ENCODE measurements at regions of chr3 and their contacts with region 1.

Region 1: DNA sequence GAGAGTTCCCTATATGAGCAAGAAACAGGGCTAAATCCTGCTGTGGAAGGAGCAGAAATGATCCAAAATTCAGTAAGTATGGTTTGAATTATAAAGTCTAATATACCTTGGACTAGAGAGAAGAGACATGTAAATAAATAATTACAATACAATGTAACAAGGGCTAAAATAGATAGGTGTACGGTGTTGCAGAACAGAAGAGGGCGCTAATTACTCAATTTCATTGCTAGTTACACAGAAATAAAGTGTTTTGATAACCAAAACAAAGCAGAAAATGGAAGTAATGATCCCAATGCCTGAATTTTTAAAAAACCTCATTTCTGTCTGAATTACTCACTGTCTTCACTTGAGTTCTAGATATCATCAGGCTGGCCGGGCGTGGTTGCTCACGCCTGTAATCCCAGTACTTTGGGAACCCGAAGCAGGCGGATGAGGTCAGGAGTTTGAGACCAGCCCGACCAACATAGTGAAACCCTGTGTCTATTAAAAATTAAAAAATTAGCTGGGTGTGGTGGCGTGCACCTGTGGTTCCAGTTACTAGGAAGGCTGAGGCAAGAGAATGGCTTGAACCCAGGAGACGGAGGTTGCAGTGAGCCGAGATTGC is 8.3 kb upstream of the PLCH1 start:
- DNase-seq: peak; percentile 39
- ATAC-seq: peak; percentile 75
- H3K4me3 ChIP-seq: no peak overlapping the region
- H3K27ac ChIP-seq: no peak overlapping the region
- H3K4me1 ChIP-seq: no peaks in the 10 kb centered on the region
- H3K27me3 ChIP-seq: peaks cover 3% of the 10 kb centered on the region
- CTCF ChIP-seq: peak; percentile 52
- POLR2A ChIP-seq: no peak
- RAD21 ChIP-seq: peak; percentile 55

Region 2: DNA sequence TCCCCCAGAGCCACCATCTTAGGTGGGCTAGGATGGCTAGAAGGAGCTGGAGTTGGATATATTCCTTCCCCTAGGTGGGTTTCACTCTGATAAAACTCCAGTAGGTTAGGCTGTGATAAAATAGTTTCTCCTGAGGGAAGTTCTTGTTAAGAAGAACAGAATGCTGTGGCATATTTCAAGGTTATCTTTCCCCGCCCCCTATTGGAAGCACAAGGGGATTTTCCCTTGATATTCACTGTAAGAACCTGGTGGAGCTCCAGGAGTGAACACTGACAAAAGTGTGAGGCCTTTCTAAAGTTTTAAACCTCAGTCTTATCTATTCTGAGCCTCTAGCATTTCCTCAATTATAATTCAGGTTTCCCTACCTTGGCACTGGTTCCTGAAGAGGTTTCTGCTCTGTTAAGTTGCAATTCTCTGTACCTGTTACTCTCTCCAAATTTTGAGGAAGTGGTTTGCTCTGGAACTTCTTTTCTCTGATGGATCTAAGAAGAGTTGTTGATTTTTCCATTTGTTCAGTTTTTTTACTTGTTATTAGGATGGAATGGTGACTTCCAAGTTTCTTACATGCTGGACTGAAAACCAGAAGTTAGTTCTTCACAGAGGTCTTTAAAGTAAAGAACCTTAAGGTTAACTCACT is 230.8 kb after region 1 on chr3:
- CTCF ChIA-PET with region 1: no interaction called
- POLR2A ChIA-PET with region 1: no interaction called
- dilution Hi-C with region 1: no loop called
- in situ Hi-C with region 1: no loop called
- intact Hi-C with region 1: loop called (anchors 5 kb)
- DNase-seq: peak; percentile 30
- ATAC-seq: no peak
- H3K4me3 ChIP-seq: no peak overlapping the region
- H3K27ac ChIP-seq: no peak overlapping the region
- H3K4me1 ChIP-seq: no peaks in the 10 kb centered on the region
- H3K27me3 ChIP-seq: no peaks in the 10 kb centered on the region
- CTCF ChIP-seq: peak; percentile 32
- POLR2A ChIP-seq: no peak
- RAD21 ChIP-seq: no peak

Region 3: DNA sequence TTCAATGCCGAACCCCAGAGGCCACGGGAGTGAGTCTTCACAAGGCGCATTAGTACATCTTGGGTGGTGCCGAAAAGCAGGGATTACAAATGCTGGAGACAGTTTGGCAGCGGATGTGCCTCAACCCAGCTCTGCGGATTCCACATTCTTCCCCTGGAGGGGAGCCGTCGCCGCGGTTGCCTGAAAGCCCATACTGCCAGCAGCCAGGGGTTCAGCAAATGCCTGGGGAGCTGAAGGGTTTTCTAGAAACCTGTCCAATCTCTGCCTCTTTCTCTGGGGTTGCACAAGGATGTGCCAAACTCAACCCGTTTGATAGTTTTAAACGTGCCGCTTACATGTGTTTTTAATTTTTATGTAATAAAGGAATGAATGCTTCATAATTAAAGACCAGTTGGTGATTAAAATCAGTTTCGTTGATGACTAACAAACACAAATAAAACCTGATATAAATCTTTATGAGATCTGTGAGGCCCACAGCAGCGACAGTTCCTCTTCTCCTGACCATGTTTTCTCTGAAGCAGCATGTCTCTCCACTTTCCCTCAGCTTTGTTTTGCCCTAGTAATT is 998.4 kb after region 1 on chr3:
- CTCF ChIA-PET with region 1: no interaction called
- POLR2A ChIA-PET with region 1: no interaction called
- dilution Hi-C with region 1: no loop called
- in situ Hi-C with region 1: no loop called
- intact Hi-C with region 1: no loop called
- DNase-seq: peak; percentile 79
- ATAC-seq: peak; percentile 77
- H3K4me3 ChIP-seq: no peak overlapping the region; the same call in 1 of the 2 replicates
- H3K27ac ChIP-seq: peak overlapping the region; percentile 92
- H3K4me1 ChIP-seq: peaks cover 14% of the 10 kb centered on the region
- H3K27me3 ChIP-seq: no peaks in the 10 kb centered on the region
- CTCF ChIP-seq: peak; percentile 18; the same call in 1 of the 2 replicates
- POLR2A ChIP-seq: peak; percentile 33; the same call in 1 of the 2 replicates
- RAD21 ChIP-seq: peak; percentile 46

Measured in IMR-90 (cell line).